SK-N-SH (cell line): ENCODE measurements at regions of chr7 and their contacts with region 1.

Region 1: DNA sequence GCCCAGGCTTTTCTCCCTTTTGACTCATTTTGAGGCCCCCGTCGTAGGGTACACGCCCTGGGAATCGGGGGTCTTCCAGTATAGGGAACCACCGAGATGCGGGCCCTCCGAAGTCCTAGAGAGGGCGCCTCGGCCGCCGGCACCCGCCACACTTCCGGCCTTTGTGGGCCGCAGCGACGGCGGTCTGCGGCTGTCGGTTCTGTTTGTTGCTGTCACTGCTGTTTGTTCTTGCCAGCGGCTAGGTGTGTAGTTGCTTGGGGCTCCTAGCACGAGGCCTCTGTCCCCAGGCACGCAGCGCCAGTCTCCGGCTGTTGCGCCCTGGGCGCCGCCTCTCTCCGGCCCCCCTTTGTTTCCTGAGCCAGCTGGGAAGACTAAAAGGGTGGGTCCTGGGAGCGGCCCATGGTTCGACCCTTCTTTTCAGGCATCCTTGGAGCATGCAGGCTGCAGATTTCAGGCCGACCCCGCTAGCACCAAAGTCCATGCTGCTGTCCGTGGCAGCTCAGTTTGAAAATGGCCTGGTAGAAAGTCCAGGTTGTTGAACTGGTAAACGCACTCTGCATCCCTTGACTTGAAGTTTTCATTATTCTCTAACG is 17.8 kb upstream of the ZKSCAN1 start:
- DNase-seq: peak; percentile 82
- H3K4me3 ChIP-seq: peak overlapping the region in 1 of 2 experiments; percentile 2; a peak in 1 of 4 replicates
- H3K27ac ChIP-seq: no peak overlapping the region
- H3K4me1 ChIP-seq: no peaks in the 10 kb centered on the region; a peak in 1 of 4 replicates
- H3K27me3 ChIP-seq: peaks cover 7% of the 10 kb centered on the region; the same call in 1 of the 2 replicates
- CTCF ChIP-seq: no peak
- EP300 ChIP-seq: no peak
- RAD21 ChIP-seq: no peak

Region 2: GRCh38 chr7:99918959-99919813 is 78.5 kb before region 1 on chr7 and contains the start of gene TRIM4:
- CTCF ChIA-PET with region 1: interaction called, 85 read pairs
- POLR2A ChIA-PET with region 1: no interaction called
- DNase-seq: peak; percentile 87
- H3K4me3 ChIP-seq: peak within 1 kb of the TSS; percentile 59 to 64
- H3K27ac ChIP-seq: peak within 1 kb of the TSS; percentile 62 to 64
- H3K4me1 ChIP-seq: no peaks in the 10 kb centered on the region; a peak in 1 of 4 replicates
- H3K27me3 ChIP-seq: peaks cover 19% of the 10 kb centered on the region; the same call in 1 of the 2 replicates
- CTCF ChIP-seq: peak; percentile 20; the same call in 1 of the 2 replicates
- EP300 ChIP-seq: no peak
- RAD21 ChIP-seq: no peak
- polyA plus RNA-seq, gene TRIM4: 6.6 and 7.6 TPM in 2 replicates

Region 3: GRCh38 chr7:100015232-100016209 is 17.9 kb after region 1 on chr7 and contains the start of gene ZKSCAN1:
- CTCF ChIA-PET with region 1: interaction called, 59 read pairs
- POLR2A ChIA-PET with region 1: interaction called, 21 read pairs
- DNase-seq: peak; percentile 98
- H3K4me3 ChIP-seq: peak within 1 kb of the TSS; percentile 78 to 89
- H3K27ac ChIP-seq: peak within 1 kb of the TSS; percentile 78 to 85
- H3K4me1 ChIP-seq: peaks cover 0 to 12% of the 10 kb centered on the region in 2 experiments; a peak in 3 of 4 replicates
- H3K27me3 ChIP-seq: no peaks in the 10 kb centered on the region
- CTCF ChIP-seq: no peak
- EP300 ChIP-seq: no peak
- RAD21 ChIP-seq: no peak; the same call in 1 of the 2 replicates
- polyA plus RNA-seq, gene ZKSCAN1: 21.1 and 30.7 TPM in 2 replicates

Region 4: GRCh38 chr7:100049441-100050311 is 52.0 kb after region 1 on chr7 and contains the start of gene ZSCAN21:
- CTCF ChIA-PET with region 1: interaction called, 60 read pairs
- POLR2A ChIA-PET with region 1: interaction called, 5 read pairs
- DNase-seq: peak; percentile 96
- H3K4me3 ChIP-seq: peak within 1 kb of the TSS; percentile 70 to 86
- H3K27ac ChIP-seq: peak within 1 kb of the TSS; percentile 93 to 94
- H3K4me1 ChIP-seq: peaks cover 5 to 9% of the 10 kb centered on the region in 2 experiments; a peak in 2 of 4 replicates
- H3K27me3 ChIP-seq: no peaks in the 10 kb centered on the region
- CTCF ChIP-seq: peak; percentile 47
- EP300 ChIP-seq: 0 out of 4 replicates have a peak, but pooled peaks of 1 of the 2 experiments have one; percentile 20
- RAD21 ChIP-seq: peak; percentile 31; the same call in 1 of the 2 replicates
- polyA plus RNA-seq, gene ZSCAN21: 17.5 and 22.8 TPM in 2 replicates

Region 5: DNA sequence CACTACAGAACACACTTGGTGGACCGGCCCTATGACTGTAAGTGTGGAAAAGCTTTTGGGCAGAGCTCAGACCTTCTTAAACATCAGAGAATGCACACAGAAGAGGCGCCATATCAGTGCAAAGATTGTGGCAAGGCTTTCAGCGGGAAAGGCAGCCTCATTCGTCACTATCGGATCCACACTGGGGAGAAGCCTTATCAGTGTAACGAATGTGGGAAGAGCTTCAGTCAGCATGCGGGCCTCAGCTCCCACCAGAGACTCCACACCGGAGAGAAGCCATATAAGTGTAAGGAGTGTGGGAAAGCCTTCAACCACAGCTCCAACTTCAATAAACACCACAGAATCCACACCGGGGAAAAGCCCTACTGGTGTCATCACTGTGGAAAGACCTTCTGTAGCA is 66.5 kb after region 1 on chr7:
- CTCF ChIA-PET with region 1: interaction called, 10 read pairs
- POLR2A ChIA-PET with region 1: interaction called, 3 read pairs
- DNase-seq: no peak
- H3K4me3 ChIP-seq: no peak overlapping the region
- H3K27ac ChIP-seq: no peak overlapping the region
- H3K4me1 ChIP-seq: peaks cover 0 to 21% of the 10 kb centered on the region in 2 experiments; a peak in 1 of 4 replicates
- H3K27me3 ChIP-seq: no peaks in the 10 kb centered on the region
- CTCF ChIP-seq: no peak
- EP300 ChIP-seq: no peak
- RAD21 ChIP-seq: no peak